Activated T-helper 1 cell treated with anti-CD3 and anti-CD28 coated beads, Interleukin-12 subunit alpha, Interleukin-12 subunit beta, Interleukin-2, Interleukin-4 antibody, amounts not matched to agents 30 ng/mL and 10 ng/mL and 1 ng/mL, durations not matched to agents 14 hours and 24 hours and 36 hours (primary cell): ENCODE measurements at regions of chr9 and their contacts with region 1.

Region 1: GRCh38 chr9:36560857-36561221 is 11.9 kb upstream of the MELK start:
- DNase-seq: no peak
- H3K4me3 Mint-ChIP-seq: no peak overlapping the region
- H3K27ac Mint-ChIP-seq: no peak overlapping the region
- H3K4me1 Mint-ChIP-seq: no peaks in the 10 kb centered on the region
- H3K27me3 Mint-ChIP-seq: no peaks in the 10 kb centered on the region

Region 2: GRCh38 chr9:36258208-36258988 is 302.4 kb before region 1 on chr9 and contains the start of gene GNE:
- intact Hi-C with region 1: loop called (anchors 5 kb)
- DNase-seq: peak; percentile 98
- H3K4me3 Mint-ChIP-seq: peak within 1 kb of the TSS; percentile 96
- H3K27ac Mint-ChIP-seq: peak within 1 kb of the TSS; percentile 96
- H3K4me1 Mint-ChIP-seq: peaks cover 15% of the 10 kb centered on the region
- H3K27me3 Mint-ChIP-seq: no peaks in the 10 kb centered on the region
- total RNA-seq, gene GNE: 21.7 and 22.7 TPM in 2 replicates